ENCODE measurements at regions of chr1 and their contacts with region 1.

Region 1: DNA sequence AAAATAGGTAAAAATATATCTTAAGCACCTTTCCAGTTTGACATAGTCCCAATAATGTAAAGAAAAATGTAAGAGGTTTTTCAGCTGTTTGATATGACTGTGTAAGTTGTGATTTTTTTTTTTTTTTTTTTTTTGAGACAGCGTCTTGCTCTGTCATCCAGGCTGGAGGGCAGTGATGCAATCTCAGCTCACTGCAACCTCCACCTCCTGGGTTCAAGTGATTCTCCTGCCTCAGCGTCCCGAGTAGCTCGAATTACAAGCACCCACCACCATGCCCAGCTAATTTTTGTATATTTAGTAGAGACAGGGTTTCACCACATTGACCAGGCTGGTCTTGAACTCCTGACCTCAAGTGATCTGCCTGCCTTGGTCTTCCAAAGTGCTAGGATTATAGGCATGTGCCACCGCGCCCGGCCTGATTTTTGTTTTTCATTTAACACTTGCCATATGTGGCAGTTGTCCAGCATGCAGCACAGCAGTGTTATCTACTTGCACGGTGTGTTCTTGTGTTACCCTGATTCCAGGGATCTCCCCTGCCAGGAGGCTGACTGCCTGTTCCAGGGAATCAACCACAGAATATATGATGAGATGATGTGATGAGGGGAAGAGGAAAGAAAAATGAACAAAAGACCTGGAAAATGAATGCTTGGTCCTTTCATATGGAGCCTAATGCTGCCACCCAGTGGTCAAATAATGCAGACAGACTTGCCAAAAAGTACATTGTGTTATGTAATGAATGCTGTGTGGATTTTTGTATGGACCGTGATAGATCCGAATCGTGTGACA is 79.0 kb downstream of the RAVER2 start:
- DNase-seq: no peak
- ATAC-seq: peak; percentile 73

Region 2: DNA sequence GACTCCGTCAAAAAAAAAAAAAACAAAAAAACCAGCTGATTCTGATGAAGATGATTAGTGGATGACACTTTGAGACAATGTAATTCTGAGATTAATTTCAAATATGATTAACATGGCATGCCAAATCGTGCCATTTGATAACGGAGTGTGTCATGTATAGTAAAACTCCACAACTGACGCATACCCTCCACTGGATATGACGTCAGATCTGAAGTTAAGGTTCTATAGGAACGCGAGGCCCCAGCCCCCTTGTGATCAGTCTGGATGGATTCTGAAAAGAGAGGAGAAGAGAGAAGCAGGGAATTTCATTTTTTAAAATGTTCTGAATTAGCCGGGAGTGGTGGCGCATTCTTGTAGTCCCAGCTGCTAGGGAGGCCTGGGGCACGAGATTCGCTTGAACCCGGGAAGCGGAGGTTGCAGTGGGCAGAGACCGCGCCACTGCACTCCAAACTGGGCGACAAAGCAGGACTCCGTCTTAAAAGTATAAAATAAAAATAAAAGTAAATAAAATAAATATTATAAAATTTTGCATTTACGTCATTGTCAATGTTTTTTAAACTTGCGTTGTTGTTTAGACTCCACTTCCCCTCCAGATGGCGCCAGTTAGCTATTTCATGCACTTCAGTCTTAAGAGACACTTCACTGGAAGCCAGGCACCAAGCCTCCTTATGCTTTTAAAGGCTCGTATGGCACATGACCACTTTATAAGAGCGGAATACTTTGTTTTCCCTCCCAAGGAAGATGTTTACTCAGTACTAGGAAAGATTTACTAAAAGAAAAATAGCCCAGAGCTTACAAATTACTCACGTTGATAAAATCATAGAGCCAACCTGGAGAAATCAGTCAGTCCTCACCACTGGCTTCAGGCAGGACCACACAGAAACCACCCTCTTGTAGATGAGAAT is 555.0 kb before region 1 on chr1:
- intact Hi-C with region 1: loop called (anchors 5 kb)
- DNase-seq: no peak
- ATAC-seq: peak; percentile 72

Region 3: GRCh38 chr1:64553281-64553680 is 270.6 kb before region 1 on chr1:
- intact Hi-C with region 1: loop called (anchors 10 kb)
- DNase-seq: no peak
- ATAC-seq: no peak

Region 4: GRCh38 chr1:64686828-64687724 is 136.8 kb before region 1 on chr1:
- intact Hi-C with region 1: loop called (anchors 2 kb)
- DNase-seq: no peak
- ATAC-seq: peak; percentile 54

Region 5: DNA sequence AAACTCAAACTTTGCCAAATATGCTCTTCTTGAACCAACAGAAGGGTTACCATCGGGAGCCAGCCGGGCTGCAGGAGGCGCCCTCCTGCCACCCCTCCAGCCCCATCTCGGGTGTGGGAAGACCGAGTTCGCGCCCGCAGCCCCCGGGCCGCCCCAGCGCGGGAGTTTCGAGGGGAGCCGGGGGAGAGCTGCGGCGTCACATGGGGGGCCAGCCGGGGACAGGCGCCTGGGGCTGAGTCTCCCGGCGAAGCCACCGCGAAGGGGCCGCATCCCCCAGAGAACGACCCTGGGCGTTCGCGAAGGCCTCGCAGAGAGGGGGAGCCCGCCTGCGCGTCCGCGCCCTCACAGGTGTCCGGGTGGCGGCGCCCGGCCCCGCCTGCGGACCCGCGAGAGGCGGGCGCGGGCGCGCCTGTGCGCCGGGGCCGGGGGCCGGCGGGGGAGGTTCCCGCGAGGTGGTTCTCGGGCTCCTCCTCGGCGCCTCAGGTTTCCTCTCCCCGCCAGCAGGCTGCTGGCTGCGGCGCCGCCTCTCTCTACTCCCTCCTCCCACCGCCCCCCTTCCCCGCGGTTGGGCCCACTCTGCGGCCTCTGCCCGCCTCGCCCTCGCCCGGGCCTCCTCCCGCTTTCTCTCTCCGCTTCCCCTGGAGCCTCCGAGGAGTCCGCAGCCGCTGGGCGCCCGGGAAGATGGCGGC is 79.2 kb before region 1 on chr1 and contains the start of gene RAVER2:
- intact Hi-C with region 1: loop called (anchors 2 kb)
- DNase-seq: peak; percentile 87
- ATAC-seq: peak; percentile 89
- total RNA-seq, gene RAVER2: 30.1 TPM

Region 6: DNA sequence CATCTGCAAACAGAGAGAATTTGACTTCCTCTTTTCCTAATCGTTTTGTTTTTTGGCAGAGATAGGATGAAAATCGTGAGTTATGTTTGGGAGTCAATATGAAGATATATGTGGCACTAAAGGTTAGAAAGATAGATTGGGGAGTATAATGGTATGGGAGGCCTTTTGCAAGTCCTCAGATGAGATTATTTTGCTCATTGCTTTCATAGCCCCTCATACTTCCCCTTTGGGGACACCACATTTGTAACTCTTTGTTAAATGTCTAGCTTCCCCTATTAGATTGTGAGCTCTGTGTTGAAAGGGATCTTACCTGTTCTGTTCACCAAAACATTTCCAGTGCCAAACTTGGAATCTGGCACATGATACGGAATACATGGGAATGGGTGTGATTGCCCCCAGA is 48.8 kb before region 1 on chr1:
- intact Hi-C with region 1: no loop called
- DNase-seq: no peak
- ATAC-seq: no peak

Region 7: DNA sequence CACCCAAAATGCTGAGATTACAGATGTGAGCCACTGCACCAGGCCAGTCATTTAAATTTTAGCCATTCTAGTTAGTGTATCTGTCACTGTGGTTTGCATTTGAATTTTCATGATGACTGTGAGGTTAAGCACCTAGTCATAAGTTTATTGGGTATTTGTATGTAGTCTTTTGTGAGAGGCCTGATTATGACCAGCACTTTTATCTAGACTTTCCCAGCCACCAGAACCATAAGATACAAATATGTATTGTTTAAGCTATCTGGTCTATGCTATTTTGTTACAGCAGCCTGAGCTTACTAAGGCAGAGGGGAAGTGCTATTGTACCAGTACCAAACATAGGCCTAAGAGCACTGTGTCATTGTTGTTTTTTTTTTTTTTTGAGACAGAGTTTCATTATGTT is 465.6 kb after region 1 on chr1:
- intact Hi-C with region 1: no loop called
- DNase-seq: no peak
- ATAC-seq: no peak